H1 (cell line): ENCODE measurements at regions of chr3 and their contacts with region 1.

Region 1: DNA sequence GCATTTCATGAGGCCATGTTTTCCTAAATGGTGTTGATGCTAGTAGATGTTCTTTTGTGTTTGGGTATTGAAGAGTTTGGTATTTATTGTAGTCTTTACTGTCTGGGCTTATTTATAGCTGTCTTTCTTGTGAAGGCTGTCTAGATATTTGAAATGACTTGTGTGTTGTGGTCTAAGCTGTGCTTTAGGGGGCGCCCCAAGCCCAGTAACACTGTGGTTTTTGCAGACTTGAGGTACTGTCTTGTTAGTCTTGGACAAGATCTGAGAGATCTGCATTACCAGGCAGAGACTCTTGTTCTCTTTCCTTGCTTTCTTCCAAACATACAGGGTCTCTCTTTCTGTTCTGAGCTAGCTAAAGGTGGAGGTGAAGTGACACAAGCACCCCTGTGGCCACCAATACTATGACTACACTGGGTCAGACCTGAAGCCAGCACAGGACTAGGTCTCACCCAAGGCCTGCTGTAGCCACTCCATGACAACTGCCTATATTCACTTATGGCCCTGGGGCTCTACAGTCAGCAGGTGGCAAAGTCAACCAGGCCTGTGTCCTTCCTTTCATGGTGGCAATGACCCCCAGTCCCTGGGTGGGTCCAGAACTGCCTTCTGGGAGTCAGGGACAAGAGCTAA is 152.1 kb upstream of the TBC1D5 start:
- DNase-seq: peak; percentile 47 to 79
- H3K4me3 ChIP-seq: no peak overlapping the region
- H3K27ac ChIP-seq: no peak overlapping the region
- H3K4me1 ChIP-seq: no peaks in the 10 kb centered on the region; a peak in 1 of 7 replicates
- H3K27me3 ChIP-seq: no peaks in the 10 kb centered on the region
- CTCF ChIP-seq: peak; percentile 10 to 81 (median 77)
- EP300 ChIP-seq: no peak
- POLR2A ChIP-seq: no peak
- RAD21 ChIP-seq: peak; percentile 95 to 98

Region 2: GRCh38 chr3:17562845-17563244 is 331.7 kb before region 1 on chr3:
- CTCF ChIA-PET with region 1: no interaction called
- POLR2A ChIA-PET with region 1: no interaction called
- DNase-seq: no peak
- H3K4me3 ChIP-seq: no peak overlapping the region
- H3K27ac ChIP-seq: no peak overlapping the region
- H3K4me1 ChIP-seq: no peaks in the 10 kb centered on the region
- H3K27me3 ChIP-seq: no peaks in the 10 kb centered on the region
- CTCF ChIP-seq: no peak
- EP300 ChIP-seq: no peak
- POLR2A ChIP-seq: no peak
- RAD21 ChIP-seq: no peak

Region 3: DNA sequence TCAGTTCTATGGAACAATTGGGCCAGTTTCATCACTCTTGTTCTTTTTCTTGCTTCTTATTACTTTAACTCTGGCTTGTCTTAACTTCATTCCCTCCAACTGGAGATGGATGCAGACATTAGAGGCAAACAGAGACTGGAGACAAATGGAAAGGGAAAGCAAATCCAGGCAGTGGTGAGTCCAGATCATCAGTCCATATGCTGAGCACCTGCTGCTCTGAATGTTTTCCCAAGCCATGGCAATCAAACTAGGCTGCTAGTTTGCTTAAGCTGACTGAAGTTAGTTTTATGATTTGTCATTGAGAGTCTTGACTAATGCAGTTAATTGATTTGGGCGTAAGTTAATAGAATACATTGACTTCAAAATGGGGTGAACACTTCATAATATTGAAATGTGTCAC is 111.1 kb before region 1 on chr3:
- CTCF ChIA-PET with region 1: no interaction called
- POLR2A ChIA-PET with region 1: no interaction called
- DNase-seq: no peak
- H3K4me3 ChIP-seq: no peak overlapping the region
- H3K27ac ChIP-seq: no peak overlapping the region
- H3K4me1 ChIP-seq: no peaks in the 10 kb centered on the region
- H3K27me3 ChIP-seq: no peaks in the 10 kb centered on the region
- CTCF ChIP-seq: no peak
- EP300 ChIP-seq: no peak
- POLR2A ChIP-seq: no peak
- RAD21 ChIP-seq: no peak

Region 4: DNA sequence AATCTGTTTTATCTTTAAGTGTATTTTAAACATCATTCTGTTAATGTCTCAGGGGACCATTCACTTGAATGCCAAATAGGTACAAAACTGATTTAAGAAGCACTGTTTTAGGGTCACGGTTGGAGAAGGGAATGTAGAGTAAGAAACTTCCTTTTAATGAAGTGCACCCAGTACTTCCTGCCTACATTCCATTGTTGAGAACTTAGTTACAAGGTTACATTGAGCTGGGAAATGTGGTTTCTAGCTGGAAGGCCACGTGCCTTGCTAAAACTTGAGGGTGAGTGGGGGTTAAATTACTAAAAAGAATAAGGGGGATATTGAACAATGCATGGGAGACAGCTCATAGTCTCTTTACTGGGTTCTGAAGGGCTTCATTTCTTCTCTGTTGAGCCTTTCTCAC is 73.8 kb before region 1 on chr3:
- CTCF ChIA-PET with region 1: no interaction called
- POLR2A ChIA-PET with region 1: no interaction called
- DNase-seq: no peak
- H3K4me3 ChIP-seq: no peak overlapping the region
- H3K27ac ChIP-seq: no peak overlapping the region
- H3K4me1 ChIP-seq: no peaks in the 10 kb centered on the region
- H3K27me3 ChIP-seq: no peaks in the 10 kb centered on the region
- CTCF ChIP-seq: no peak
- EP300 ChIP-seq: no peak
- POLR2A ChIP-seq: no peak
- RAD21 ChIP-seq: no peak

Region 5: DNA sequence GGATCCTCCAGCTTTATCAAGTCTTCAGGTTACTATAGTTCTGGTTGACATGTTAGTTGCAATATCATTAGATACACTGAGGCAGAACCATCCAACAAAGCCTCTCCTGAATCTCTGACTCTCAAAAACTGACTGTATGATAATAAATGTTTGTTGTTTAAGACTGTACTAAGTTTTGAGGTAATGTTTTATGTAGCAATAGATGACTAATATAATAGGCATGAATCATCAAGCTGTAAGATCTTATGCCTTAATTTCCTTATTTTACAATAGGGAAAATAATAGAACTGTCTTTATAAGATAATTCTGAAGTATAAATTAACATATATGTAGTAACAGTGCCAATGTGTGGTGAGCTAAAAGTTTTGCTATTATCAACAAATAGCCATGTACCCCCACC is 63.2 kb before region 1 on chr3:
- CTCF ChIA-PET with region 1: no interaction called
- POLR2A ChIA-PET with region 1: no interaction called
- DNase-seq: no peak
- H3K4me3 ChIP-seq: no peak overlapping the region
- H3K27ac ChIP-seq: no peak overlapping the region
- H3K4me1 ChIP-seq: no peaks in the 10 kb centered on the region
- H3K27me3 ChIP-seq: no peaks in the 10 kb centered on the region
- CTCF ChIP-seq: no peak
- EP300 ChIP-seq: no peak
- POLR2A ChIP-seq: no peak
- RAD21 ChIP-seq: no peak

Region 6: DNA sequence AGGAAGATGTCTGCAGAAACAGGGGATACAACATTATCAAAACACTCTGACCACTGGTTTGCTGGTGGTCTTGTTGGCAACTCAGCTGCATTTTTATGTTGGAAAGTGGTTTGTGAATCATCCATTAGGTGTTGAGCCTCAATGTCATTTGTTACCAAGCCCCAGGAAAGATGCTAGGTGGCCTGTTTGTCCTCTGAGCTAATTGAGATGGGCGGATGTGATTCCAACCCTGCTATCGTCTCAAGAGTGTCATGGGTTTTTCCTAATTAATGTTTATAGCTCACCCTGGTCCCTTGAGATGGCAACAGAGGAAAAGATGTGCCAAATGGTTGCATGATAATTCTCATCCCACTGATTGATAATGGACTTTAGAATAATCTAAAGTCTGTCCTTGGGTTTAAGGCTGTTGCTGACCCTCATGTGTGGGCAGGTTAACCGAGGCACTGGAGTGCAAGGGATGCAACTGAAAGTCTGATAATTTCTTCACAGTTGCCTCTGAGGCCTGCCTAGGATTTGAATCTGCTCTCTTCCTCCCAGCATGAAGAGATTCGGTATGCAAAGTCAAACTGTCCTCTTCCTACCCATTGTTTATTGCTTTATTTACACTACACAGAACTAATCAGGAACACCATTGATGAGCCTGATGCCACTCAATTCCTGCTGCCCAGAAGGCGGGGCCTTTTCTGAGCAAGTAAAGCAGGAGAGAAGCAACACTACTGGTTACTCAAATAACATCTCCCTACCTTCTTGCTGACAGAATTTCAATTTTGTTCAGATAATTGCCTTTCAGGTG is 14.0 kb after region 1 on chr3:
- CTCF ChIA-PET with region 1: interaction called, 16 read pairs
- POLR2A ChIA-PET with region 1: no interaction called
- DNase-seq: no peak
- H3K4me3 ChIP-seq: no peak overlapping the region
- H3K27ac ChIP-seq: no peak overlapping the region
- H3K4me1 ChIP-seq: peaks cover 0 to 11% (median 3%) of the 10 kb centered on the region in 4 experiments; a peak in 4 of 7 replicates
- H3K27me3 ChIP-seq: no peaks in the 10 kb centered on the region
- CTCF ChIP-seq: no peak
- EP300 ChIP-seq: no peak
- POLR2A ChIP-seq: no peak
- RAD21 ChIP-seq: no peak

Region 7: GRCh38 chr3:17979252-17979651 is 84.7 kb after region 1 on chr3:
- CTCF ChIA-PET with region 1: interaction called, 22 read pairs
- POLR2A ChIA-PET with region 1: no interaction called
- DNase-seq: no peak
- H3K4me3 ChIP-seq: no peak overlapping the region
- H3K27ac ChIP-seq: no peak overlapping the region
- H3K4me1 ChIP-seq: no peaks in the 10 kb centered on the region
- H3K27me3 ChIP-seq: no peaks in the 10 kb centered on the region
- CTCF ChIP-seq: peak in 2 of 3 experiments; percentile 35; a peak in 3 of 4 replicates
- EP300 ChIP-seq: no peak
- POLR2A ChIP-seq: no peak
- RAD21 ChIP-seq: peak; percentile 70

Region 8: DNA sequence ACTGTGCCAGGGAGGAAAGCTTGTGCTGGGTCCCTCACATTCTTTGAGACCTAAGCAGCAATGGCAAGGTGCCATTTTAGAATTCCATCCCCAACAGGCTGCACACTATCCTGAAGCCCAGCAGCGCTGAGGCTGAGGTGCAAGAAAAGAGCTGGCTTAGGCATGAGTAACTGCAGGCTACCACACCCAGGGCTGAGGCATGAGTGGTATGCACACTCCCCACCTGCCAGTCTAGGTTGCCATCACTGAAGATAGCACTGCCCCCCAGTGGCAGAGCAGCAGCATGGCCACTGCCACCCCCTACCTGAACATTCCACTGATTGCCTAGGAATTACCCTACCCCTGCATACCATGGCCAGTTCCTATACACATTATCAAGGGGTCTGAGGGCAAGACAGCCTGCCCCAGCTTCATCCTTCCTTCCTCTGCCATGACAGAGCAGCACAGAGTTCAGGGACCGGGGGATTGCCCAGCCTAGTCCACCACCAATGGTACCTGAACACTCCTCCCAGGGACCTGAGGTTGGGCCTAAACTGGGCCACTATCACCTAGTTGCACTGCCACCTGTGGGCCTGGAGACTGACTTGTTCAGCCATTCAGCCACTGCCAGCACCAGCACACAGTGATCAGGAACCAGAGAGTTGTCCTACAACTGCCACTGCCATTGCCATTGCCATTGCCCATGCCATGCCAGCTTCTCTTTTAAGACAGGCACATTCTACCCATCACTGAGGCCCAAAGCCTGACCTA is 400.8 kb after region 1 on chr3:
- CTCF ChIA-PET with region 1: interaction called, 20 read pairs
- POLR2A ChIA-PET with region 1: no interaction called
- DNase-seq: peak; percentile 77 to 89
- H3K4me3 ChIP-seq: no peak overlapping the region
- H3K27ac ChIP-seq: no peak overlapping the region
- H3K4me1 ChIP-seq: peaks cover 0 to 4% (median 3%) of the 10 kb centered on the region in 4 experiments; a peak in 4 of 7 replicates
- H3K27me3 ChIP-seq: no peaks in the 10 kb centered on the region
- CTCF ChIP-seq: peak; percentile 80 to 99 (median 99)
- EP300 ChIP-seq: no peak
- POLR2A ChIP-seq: no peak
- RAD21 ChIP-seq: peak; percentile 93 to 95

Region 9: GRCh38 chr3:18389108-18389733 is 494.7 kb after region 1 on chr3:
- CTCF ChIA-PET with region 1: interaction called, 15 read pairs
- POLR2A ChIA-PET with region 1: no interaction called
- DNase-seq: no peak
- H3K4me3 ChIP-seq: no peak overlapping the region
- H3K27ac ChIP-seq: no peak overlapping the region
- H3K4me1 ChIP-seq: peaks cover 0 to 3% (median 0%) of the 10 kb centered on the region in 4 experiments; a peak in 3 of 7 replicates
- H3K27me3 ChIP-seq: no peaks in the 10 kb centered on the region
- CTCF ChIP-seq: peak in 2 of 3 experiments; percentile 17 to 21; a peak in 2 of 4 replicates
- EP300 ChIP-seq: no peak
- POLR2A ChIP-seq: no peak
- RAD21 ChIP-seq: peak; percentile 64 to 66